Cardiac septum (tissue), 1 donor: ENCODE measurements at regions of chr14 and their contacts with region 1.

Region 1: GRCh38 chr14:75293920-75294642 is 15.5 kb downstream of the FOS start:
- DNase-seq: peak; percentile 99

Region 2: GRCh38 chr14:75132382-75133086 is 161.5 kb before region 1 on chr14:
- intact Hi-C with region 1: loop called (anchors 2 kb)
- DNase-seq: no peak

Region 3: DNA sequence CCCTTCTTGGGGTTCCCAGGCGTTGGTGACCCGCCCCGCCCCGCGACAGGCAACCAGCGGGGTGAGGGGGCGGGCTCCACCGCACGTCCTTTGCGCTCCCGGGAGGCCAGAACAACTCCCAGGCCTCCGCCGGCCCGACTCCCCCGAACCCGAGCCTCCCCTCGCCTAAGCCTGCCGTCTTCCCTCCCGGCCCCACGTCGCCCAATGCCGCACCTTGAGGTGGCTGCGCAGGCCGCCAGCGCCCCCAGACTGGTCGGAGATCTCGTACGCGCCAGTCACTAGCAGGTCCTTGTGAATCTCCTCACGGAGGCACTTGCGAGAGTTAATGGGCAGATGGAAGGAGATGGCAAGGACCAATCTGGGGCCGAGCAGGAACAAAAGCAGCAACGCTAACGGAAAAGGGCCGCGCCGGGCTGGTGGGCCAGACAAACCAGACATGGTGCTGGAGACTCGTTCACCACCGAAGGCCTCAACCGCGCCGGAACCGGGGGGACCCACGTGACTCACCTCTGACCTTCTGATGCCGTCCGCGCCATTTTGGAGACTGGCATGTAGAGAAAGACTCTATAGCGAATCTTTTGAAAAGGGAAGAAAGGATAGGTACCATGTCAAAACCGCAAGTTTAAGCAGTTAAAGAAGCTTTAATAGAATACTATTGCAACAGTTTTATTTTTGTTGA is 117.8 kb before region 1 on chr14 and contains the start of gene TMED10:
- intact Hi-C with region 1: loop called (anchors 2 kb)
- DNase-seq: peak; percentile 94
- total RNA-seq, gene TMED10: 283 TPM

Region 4: DNA sequence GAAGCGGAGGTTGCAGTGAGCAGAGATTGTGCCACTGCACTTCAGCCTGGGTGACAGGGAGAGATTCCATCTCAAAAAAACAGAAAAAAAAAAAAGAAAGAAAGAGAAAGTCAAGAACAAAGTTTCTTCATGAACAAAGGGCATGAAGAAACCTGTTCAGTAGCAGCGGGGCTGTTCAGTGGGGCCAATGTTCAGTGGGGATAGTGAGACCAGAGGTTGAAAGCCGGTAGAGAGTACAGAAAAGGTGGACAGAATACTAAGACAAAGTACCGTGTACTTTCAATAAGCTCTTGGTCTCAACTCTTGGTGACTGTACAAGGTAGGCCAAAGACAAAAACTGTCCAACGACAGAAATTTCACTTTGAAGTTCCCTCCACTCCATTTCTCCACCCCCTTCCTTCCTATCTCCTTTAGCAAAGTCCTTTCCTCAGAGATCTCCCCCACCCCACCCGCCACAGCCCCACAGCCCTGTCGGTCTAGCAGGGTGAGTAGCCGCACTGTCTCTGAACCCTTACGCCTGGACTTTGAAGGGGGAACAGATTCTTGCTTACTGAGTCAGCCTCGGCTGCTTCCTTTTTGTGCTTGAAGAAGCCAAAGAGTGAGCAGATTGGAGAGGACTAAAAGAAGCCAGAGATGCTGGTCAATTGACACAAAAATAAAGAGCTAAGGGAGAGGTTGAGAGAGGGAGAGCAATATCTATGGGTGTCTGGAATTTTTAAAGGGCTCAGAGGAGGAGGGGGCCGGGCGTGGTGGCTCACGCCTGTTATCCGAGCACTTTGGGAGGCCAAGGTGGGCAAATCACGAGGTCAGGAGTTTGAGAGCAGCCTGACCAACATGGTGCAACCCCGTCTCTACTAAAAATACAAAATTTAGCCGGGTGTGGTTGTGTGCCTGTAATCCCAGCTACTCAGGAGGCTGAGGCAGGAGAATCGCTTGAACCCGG is 59.6 kb before region 1 on chr14:
- intact Hi-C with region 1: loop called (anchors 5 kb)
- DNase-seq: no peak

Region 5: GRCh38 chr14:75258615-75259466 is 35.2 kb before region 1 on chr14:
- intact Hi-C with region 1: loop called (anchors 2 kb)
- DNase-seq: peak; percentile 100

Region 6: DNA sequence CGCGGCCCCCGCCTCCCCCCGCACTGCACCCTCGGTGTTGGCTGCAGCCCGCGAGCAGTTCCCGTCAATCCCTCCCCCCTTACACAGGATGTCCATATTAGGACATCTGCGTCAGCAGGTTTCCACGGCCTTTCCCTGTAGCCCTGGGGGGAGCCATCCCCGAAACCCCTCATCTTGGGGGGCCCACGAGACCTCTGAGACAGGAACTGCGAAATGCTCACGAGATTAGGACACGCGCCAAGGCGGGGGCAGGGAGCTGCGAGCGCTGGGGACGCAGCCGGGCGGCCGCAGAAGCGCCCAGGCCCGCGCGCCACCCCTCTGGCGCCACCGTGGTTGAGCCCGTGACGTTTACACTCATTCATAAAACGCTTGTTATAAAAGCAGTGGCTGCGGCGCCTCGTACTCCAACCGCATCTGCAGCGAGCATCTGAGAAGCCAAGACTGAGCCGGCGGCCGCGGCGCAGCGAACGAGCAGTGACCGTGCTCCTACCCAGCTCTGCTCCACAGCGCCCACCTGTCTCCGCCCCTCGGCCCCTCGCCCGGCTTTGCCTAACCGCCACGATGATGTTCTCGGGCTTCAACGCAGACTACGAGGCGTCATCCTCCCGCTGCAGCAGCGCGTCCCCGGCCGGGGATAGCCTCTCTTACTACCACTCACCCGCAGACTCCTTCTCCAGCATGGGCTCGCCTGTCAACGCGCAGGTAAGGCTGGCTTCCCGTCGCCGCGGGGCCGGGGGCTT is 15.5 kb before region 1 on chr14 and contains the start of gene FOS:
- intact Hi-C with region 1: loop called (anchors 1 kb)
- DNase-seq: peak; percentile 98
- total RNA-seq, gene FOS: 25.8 TPM

Region 7: GRCh38 chr14:75372260-75372659 is 78.2 kb after region 1 on chr14:
- intact Hi-C with region 1: no loop called
- DNase-seq: no peak

Region 8: DNA sequence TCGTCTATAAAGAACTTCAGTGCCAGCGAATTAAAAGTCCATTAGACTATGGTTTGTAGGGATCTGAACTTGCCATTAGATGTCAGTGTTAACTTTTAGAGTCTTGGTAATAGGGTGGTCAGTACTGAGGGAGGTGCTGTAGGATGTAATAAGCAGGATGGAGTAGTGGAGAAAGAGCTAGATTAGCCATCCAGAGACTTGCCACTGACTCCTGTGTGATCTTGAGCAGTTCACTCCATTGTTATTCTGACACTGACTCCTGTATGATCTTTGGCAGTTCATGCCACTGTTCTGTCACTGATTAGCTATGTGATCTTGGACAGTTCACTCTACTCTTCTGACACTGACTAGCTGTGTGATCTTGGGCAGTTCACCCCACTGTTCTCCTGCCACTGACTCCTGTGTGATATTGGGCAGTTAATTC is 500.5 kb after region 1 on chr14:
- intact Hi-C with region 1: no loop called
- DNase-seq: no peak